AG04450 (cell line): ENCODE measurements at regions of chr3 and their contacts with region 1.

Region 1: DNA sequence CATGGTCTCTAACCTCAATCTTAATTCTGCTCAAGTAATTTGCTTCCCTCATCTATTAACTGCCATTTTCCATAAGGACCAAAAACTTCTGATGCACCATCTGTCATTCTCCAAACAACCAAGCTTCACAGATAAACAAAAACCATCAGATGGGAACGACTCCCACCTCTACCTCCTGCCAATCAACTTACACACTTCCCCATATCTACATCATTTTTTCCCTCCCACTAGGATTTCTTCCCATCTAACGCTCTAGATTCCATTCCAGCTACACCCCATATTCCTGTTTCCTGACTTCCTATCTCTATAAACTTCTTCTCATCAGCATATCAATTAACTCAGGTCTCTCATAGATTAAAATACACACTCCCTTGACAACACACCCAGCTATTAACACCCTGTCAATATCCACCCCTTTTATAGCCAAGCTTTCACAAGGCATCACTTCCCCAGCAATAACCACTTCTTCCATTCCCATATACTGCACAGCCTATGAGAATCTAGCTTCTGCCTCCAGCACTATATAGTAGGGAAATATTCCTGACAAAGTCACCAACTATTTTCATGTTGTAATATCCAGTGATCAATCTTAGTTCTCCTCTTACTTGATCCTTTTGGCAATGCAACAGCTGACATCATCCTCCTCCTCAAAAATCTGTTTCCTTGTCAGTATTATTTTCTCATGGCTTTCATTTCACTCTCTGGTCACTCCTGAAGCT is 39.2 kb downstream of the SNX4 start:
- DNase-seq: peak; percentile 43
- H3K4me3 ChIP-seq: no peak overlapping the region
- H3K27ac ChIP-seq: no peak overlapping the region
- H3K27me3 ChIP-seq: no peaks in the 10 kb centered on the region
- CTCF ChIP-seq: no peak

Region 2: DNA sequence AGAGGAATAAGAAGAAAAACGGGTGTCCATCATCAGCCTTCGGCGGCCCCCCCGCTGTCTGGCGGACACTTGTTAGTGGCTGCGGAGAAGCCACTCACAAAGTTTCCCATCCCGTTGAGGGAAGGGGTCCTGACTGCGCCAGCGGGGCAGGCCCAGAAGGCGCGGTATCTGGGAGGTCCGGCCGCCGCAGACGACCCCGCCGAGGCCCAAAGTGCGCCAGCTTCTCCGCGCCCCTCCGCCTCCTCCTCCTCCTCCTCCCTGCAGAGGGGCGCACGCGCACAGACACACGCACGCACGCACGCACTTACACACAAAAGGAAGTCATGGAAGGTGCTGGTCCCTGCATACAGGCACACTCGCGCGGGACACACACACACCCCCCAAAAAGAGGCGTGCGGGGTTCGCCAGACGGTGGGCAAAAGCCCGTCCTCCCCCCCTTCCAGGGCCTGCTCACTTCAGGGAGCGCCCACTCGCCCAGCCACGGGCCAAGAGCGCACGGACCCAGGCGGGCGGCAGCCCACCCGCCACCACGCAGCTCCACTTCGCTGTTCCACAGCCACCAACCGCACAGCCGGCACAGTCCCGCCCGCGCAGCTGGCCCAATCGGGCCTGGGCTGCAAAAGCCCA is 123.7 kb before region 1 on chr3:
- CTCF ChIA-PET with region 1: no interaction called
- POLR2A ChIA-PET with region 1: interaction called, 10 read pairs
- DNase-seq: no peak
- H3K4me3 ChIP-seq: peak overlapping the region; percentile 66
- H3K27ac ChIP-seq: no peak overlapping the region
- H3K27me3 ChIP-seq: no peaks in the 10 kb centered on the region
- CTCF ChIP-seq: no peak

Region 3: GRCh38 chr3:125507128-125507527 is 26.3 kb after region 1 on chr3:
- CTCF ChIA-PET with region 1: no interaction called
- POLR2A ChIA-PET with region 1: no interaction called
- DNase-seq: no peak
- H3K4me3 ChIP-seq: no peak overlapping the region
- H3K27ac ChIP-seq: no peak overlapping the region
- H3K27me3 ChIP-seq: no peaks in the 10 kb centered on the region
- CTCF ChIP-seq: no peak